GM12878 (cell line): ENCODE measurements at regions of chr20 and their contacts with region 1.

Region 1: DNA sequence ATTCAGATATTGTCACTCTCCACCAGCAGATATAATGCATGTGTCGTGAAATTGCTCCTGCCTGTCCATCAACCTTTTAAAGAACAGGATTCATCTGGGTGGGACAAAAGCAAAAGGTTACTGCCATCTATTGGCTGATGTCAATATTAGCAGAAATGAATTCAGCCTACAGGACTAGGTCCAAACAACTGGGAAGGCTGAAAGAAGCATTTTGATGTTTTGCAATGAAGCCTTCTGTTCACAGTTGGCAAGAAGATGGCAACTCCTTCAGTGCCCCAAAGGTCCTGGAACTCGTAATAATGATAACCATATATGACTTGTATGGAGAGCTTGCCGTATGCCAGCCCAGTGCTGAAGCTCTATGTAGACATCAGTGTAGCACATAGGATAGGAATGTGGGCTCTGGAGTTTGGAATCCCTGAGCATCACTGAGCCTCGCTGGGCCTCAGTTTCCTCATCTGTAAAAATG is 7.5 kb downstream of the BCAS1 start:
- DNase-seq: peak; percentile 82
- ATAC-seq: peak; percentile 42
- H3K4me3 ChIP-seq: no peak overlapping the region
- H3K27ac ChIP-seq: 0 out of 2 replicates have a peak overlapping the region, but pooled peaks have one; percentile 73
- H3K4me1 ChIP-seq: peaks cover 29% of the 10 kb centered on the region
- H3K27me3 ChIP-seq: no peaks in the 10 kb centered on the region
- CTCF ChIP-seq: peak; percentile 59 to 82 (median 73)
- EP300 ChIP-seq: no peak
- POLR2A ChIP-seq: no peak
- RAD21 ChIP-seq: peak; percentile 94

Region 2: GRCh38 chr20:53547664-53548239 is 515.1 kb before region 1 on chr20:
- CTCF ChIA-PET with region 1: interaction called, 11 read pairs
- POLR2A ChIA-PET with region 1: no interaction called
- RAD21 ChIA-PET with region 1: interaction called, 4 read pairs
- SMC1A ChIA-PET with region 1: interaction called, 5 read pairs
- in situ Hi-C with region 1: no loop called
- intact Hi-C with region 1: no loop called
- DNase-seq: peak; percentile 21
- ATAC-seq: peak; percentile 70
- H3K4me3 ChIP-seq: no peak overlapping the region
- H3K27ac ChIP-seq: no peak overlapping the region
- H3K4me1 ChIP-seq: no peaks in the 10 kb centered on the region
- H3K27me3 ChIP-seq: no peaks in the 10 kb centered on the region
- CTCF ChIP-seq: peak; percentile 65 to 78 (median 65)
- EP300 ChIP-seq: no peak
- POLR2A ChIP-seq: no peak
- RAD21 ChIP-seq: peak; percentile 92

Region 3: DNA sequence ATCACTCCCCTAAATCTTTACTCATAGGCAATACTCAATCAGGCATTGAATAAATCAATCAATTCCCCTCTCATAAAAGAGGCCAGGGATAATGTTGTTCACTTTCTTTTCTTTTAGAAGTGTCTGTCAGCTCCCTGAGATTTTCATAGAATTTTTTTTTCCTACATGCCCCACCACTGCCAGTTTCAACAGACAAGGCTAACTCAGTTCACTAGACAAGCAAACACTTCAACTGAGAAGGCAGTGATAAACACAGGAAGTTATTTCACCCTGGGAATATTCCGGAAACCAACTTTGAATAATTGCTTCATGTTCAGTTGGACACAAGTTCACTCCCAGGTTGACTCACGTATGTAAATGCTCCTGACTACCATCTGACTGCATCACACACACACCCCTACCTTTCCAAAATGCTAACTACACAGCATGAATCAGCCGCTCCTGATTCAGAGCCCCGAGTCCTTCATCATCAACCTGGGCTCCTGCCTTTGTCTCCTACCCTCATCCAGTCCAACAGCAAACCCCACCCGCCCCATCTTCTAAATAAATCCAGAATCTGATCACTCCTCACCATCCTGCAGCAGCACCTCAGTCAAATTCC is 136.3 kb before region 1 on chr20:
- CTCF ChIA-PET with region 1: interaction called, 16 read pairs
- POLR2A ChIA-PET with region 1: interaction called, 4 read pairs
- RAD21 ChIA-PET with region 1: interaction called, 10 read pairs
- SMC1A ChIA-PET with region 1: interaction called, 15 read pairs
- in situ Hi-C with region 1: no loop called
- intact Hi-C with region 1: no loop called
- DNase-seq: peak; percentile 99
- ATAC-seq: peak; percentile 80
- H3K4me3 ChIP-seq: peak overlapping the region; percentile 52
- H3K27ac ChIP-seq: peak overlapping the region; percentile 85
- H3K4me1 ChIP-seq: peaks cover 87% of the 10 kb centered on the region
- H3K27me3 ChIP-seq: no peaks in the 10 kb centered on the region
- CTCF ChIP-seq: no peak
- EP300 ChIP-seq: peak; percentile 80 to 82
- POLR2A ChIP-seq: peak; percentile 67
- RAD21 ChIP-seq: no peak

Region 4: GRCh38 chr20:53939572-53940359 is 123.1 kb before region 1 on chr20:
- CTCF ChIA-PET with region 1: interaction called, 116 read pairs
- POLR2A ChIA-PET with region 1: interaction called, 9 read pairs
- RAD21 ChIA-PET with region 1: interaction called, 71 read pairs
- SMC1A ChIA-PET with region 1: interaction called, 110 read pairs
- in situ Hi-C with region 1: loop called (anchors 5 kb)
- intact Hi-C with region 1: loop called (anchors 1 kb)
- DNase-seq: peak; percentile 93
- ATAC-seq: peak; percentile 81
- H3K4me3 ChIP-seq: 0 out of 2 replicates have a peak overlapping the region, but pooled peaks have one; percentile 63
- H3K27ac ChIP-seq: peak overlapping the region; percentile 84
- H3K4me1 ChIP-seq: peaks cover 54% of the 10 kb centered on the region
- H3K27me3 ChIP-seq: no peaks in the 10 kb centered on the region
- CTCF ChIP-seq: peak; percentile 70 to 96 (median 83)
- EP300 ChIP-seq: 0 out of 4 replicates have a peak, but pooled peaks of 1 of the 2 experiments have one; percentile 10
- POLR2A ChIP-seq: no peak
- RAD21 ChIP-seq: peak; percentile 98

Region 5: GRCh38 chr20:53957451-53958172 is 105.2 kb before region 1 on chr20:
- CTCF ChIA-PET with region 1: interaction called, 10 read pairs
- POLR2A ChIA-PET with region 1: no interaction called
- RAD21 ChIA-PET with region 1: interaction called, 9 read pairs
- SMC1A ChIA-PET with region 1: interaction called, 48 read pairs
- in situ Hi-C with region 1: no loop called
- intact Hi-C with region 1: no loop called
- DNase-seq: no peak
- ATAC-seq: 0 out of 3 replicates have a peak, but pooled peaks have one; percentile 31
- H3K4me3 ChIP-seq: no peak overlapping the region
- H3K27ac ChIP-seq: no peak overlapping the region
- H3K4me1 ChIP-seq: no peaks in the 10 kb centered on the region
- H3K27me3 ChIP-seq: no peaks in the 10 kb centered on the region; a peak in 1 of 4 replicates
- CTCF ChIP-seq: peak in 2 of 3 experiments; percentile 4 to 20; a peak in 1 of 6 replicates
- EP300 ChIP-seq: no peak
- POLR2A ChIP-seq: no peak
- RAD21 ChIP-seq: peak; percentile 23; the same call in 1 of the 2 replicates

Region 6: GRCh38 chr20:54044156-54044555 is 18.7 kb before region 1 on chr20:
- CTCF ChIA-PET with region 1: interaction called, 15 read pairs
- POLR2A ChIA-PET with region 1: no interaction called
- RAD21 ChIA-PET with region 1: interaction called, 3 read pairs
- SMC1A ChIA-PET with region 1: interaction called, 12 read pairs
- in situ Hi-C with region 1: no loop called
- intact Hi-C with region 1: no loop called
- DNase-seq: no peak
- ATAC-seq: peak; percentile 77
- H3K4me3 ChIP-seq: no peak overlapping the region
- H3K27ac ChIP-seq: no peak overlapping the region; the same call in 1 of the 2 replicates
- H3K4me1 ChIP-seq: peaks cover 13% of the 10 kb centered on the region
- H3K27me3 ChIP-seq: no peaks in the 10 kb centered on the region
- CTCF ChIP-seq: no peak
- EP300 ChIP-seq: no peak
- POLR2A ChIP-seq: no peak
- RAD21 ChIP-seq: no peak